Activated CD4-positive, alpha-beta T cell treated with anti-CD3 and anti-CD28 coated beads, Interleukin-2, amount 10 ng/mL, durations not matched to agents 7 days and 5 days (primary cell): ENCODE measurements at regions of chr10 and their contacts with region 1.

Region 1: DNA sequence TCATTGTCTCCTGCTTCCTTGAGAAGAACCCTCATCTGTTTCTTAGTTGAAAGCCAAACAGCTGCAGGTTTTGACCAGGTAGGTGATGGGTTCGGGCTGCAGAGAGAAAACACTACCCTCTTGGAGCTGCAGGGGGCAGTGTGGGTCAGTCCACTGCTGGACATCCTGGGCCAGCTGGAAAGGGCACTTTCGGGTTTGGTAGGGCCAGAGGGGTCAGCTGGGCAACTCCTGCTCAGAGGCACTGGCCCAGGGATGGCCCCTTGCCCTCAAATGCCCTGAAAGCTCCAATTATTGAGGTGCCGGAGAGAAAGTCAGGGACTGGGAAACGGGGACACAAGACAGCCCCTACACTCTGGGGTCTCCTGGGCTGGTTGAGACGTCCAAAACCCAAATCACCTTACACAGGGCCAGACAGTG is 90.7 kb downstream of the MKI67 start:
- DNase-seq: peak; percentile 62
- H3K4me3 Mint-ChIP-seq: no peak overlapping the region
- H3K27ac Mint-ChIP-seq: no peak overlapping the region
- H3K4me1 Mint-ChIP-seq: no peaks in the 10 kb centered on the region
- H3K27me3 Mint-ChIP-seq: peaks cover 2% of the 10 kb centered on the region

Region 2: DNA sequence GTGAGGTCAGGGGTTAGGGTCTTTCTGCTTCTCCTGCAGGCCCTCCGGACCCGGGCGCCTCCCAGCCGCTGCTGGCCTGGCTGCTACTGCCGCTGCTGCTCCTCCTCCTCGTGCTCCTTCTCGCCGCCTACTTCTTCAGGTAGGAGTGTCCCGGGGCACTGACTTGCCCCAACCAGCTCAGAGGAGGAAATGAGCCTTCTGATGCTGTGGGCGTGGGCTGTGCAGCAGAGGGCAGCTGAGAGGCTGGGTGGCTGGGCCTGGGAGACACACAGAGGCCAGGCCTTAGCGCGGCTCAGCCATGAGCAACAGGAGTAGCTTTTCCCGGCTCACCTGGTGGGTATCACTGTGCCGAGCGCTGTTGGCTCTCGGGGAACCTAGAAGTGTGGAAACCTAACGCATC is 11.8 kb after region 1 on chr10:
- CTCF ChIA-PET with region 1: interaction called, 23 read pairs
- POLR2A ChIA-PET with region 1: no interaction called
- DNase-seq: peak; percentile 91
- H3K4me3 Mint-ChIP-seq: peak overlapping the region; percentile 91
- H3K27ac Mint-ChIP-seq: peak overlapping the region; percentile 97
- H3K4me1 Mint-ChIP-seq: peaks cover 57% of the 10 kb centered on the region
- H3K27me3 Mint-ChIP-seq: no peaks in the 10 kb centered on the region

Region 3: GRCh38 chr10:128530301-128530700 is 494.7 kb after region 1 on chr10:
- CTCF ChIA-PET with region 1: no interaction called
- POLR2A ChIA-PET with region 1: no interaction called
- DNase-seq: no peak
- H3K4me3 Mint-ChIP-seq: no peak overlapping the region
- H3K27ac Mint-ChIP-seq: no peak overlapping the region
- H3K4me1 Mint-ChIP-seq: no peaks in the 10 kb centered on the region
- H3K27me3 Mint-ChIP-seq: peaks cover 2% of the 10 kb centered on the region